Naive thymus-derived CD4-positive, alpha-beta T cell (primary cell): ENCODE measurements at regions of chr7 and their contacts with region 1.

Region 1: DNA sequence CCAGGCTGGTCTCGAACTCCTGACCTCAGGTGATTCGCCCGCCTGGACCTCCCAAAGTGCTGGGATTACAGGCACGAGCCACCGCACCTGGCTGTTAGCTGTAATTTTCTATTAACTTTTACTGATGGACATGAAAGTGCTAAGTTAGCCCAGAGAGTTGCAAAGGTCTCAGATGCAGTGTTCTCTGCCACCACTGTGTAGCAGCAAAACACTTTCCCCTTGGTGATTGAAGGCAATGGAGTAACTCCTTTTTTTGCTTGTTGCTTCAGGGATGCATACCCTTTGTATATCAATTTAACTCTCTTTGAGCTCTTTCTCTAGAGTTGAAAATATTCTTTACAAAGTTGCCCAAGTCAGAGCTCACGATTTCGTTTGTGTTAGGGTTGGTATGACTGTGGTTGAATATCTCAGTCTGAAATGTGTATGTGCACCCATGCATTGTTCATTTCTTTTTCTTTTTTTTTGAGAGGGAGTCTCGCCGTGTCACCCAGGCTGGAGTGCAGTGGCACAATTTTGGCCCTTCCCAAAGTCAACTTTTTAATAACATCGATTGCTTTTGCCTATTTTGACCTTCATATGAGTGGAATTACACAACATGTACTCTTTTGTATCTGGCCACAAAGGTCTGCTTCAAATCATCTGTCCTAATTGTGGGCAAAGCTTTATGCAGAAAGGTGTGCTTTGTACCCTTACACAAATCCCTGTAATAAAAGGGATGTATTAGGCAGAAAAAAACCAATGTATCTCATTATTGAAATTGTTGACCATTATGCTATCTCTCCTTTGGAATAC is 52.6 kb downstream of the GTF2I start:
- DNase-seq: no peak
- ATAC-seq: no peak
- H3K4me3 ChIP-seq: no peak overlapping the region
- H3K4me3 Mint-ChIP-seq: no peak overlapping the region
- H3K27ac ChIP-seq: no peak overlapping the region
- H3K27ac Mint-ChIP-seq: peak overlapping the region in 1 of 9 donors; percentile 66
- H3K4me1 ChIP-seq: no peaks in the 10 kb centered on the region
- H3K4me1 Mint-ChIP-seq: peaks cover 0 to 4% (median 0%) of the 10 kb centered on the region in 7 donors
- H3K27me3 ChIP-seq: no peaks in the 10 kb centered on the region
- H3K27me3 Mint-ChIP-seq: no peaks in the 10 kb centered on the region

Region 2: DNA sequence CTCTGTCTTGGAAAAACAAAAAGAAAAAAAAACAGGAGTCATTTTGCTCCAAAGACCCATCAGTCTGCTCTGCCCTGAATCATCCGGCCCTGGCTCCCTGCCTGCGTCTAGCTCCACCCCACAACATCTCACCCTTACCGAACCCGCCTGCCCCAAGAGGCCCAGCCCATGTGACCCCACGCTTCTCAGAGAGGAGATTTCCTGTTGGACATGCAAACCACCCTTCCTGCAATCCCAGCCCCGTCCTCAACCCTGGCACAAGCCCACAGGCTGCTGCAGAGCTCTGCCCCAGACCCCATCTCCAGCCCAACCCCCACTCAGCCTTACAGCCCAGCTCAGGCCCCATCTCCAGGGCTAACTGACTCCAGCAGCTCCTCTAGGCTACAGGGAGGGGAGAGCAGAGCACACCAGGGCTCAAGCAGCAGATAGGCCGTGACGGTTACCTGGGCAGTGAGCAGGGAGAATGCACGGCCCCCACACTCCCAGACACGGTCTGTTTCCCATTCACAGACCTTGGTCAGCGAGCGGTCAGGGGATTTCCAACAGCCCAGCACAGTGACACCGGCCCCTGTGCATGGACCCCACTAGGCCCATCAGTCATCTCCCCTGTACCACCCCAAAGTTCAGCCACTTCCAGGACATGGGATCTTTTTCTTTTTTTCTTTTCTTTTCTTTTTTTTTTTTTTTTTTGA is 122.5 kb before region 1 on chr7:
- CTCF ChIA-PET with region 1: no interaction called
- POLR2A ChIA-PET with region 1: no interaction called
- intact Hi-C with region 1: no loop called
- DNase-seq: no peak
- ATAC-seq: no peak
- H3K4me3 ChIP-seq: no peak overlapping the region
- H3K4me3 Mint-ChIP-seq: no peak overlapping the region
- H3K27ac ChIP-seq: no peak overlapping the region
- H3K27ac Mint-ChIP-seq: no peak overlapping the region
- H3K4me1 ChIP-seq: no peaks in the 10 kb centered on the region
- H3K4me1 Mint-ChIP-seq: peaks cover 0 to 4% (median 0%) of the 10 kb centered on the region in 7 donors
- H3K27me3 ChIP-seq: no peaks in the 10 kb centered on the region
- H3K27me3 Mint-ChIP-seq: no peaks in the 10 kb centered on the region

Region 3: DNA sequence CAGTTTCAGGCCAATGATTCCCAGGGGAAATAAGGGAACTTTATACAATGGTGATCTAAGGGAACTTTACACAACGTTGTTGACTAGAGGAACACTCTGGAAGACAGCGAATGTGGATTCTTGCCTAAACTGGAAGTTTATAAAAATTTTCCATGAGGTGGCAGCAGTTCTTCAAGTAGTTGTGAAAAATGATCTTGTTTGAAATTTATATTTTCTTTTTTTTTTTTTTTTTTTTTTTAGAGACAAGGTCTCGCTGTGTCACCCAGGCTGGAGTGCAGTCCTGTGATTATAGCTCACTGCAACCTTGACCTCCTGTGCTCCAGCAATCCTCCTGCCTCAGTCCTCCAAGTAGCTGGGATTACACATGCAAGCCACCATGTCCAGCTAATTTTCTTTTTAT is 84.6 kb before region 1 on chr7:
- CTCF ChIA-PET with region 1: no interaction called
- POLR2A ChIA-PET with region 1: no interaction called
- intact Hi-C with region 1: loop called in 1 of 2 experiments (anchors 10 kb)
- DNase-seq: peak in 6 of 9 donors; percentile 18 to 38 (median 28)
- ATAC-seq: no peak
- H3K4me3 ChIP-seq: no peak overlapping the region
- H3K4me3 Mint-ChIP-seq: no peak overlapping the region
- H3K27ac ChIP-seq: no peak overlapping the region
- H3K27ac Mint-ChIP-seq: no peak overlapping the region
- H3K4me1 ChIP-seq: no peaks in the 10 kb centered on the region
- H3K4me1 Mint-ChIP-seq: peaks cover 0 to 10% (median 5%) of the 10 kb centered on the region in 7 donors
- H3K27me3 ChIP-seq: no peaks in the 10 kb centered on the region
- H3K27me3 Mint-ChIP-seq: peaks cover 0 to 4% (median 0%) of the 10 kb centered on the region in 5 donors

Region 4: DNA sequence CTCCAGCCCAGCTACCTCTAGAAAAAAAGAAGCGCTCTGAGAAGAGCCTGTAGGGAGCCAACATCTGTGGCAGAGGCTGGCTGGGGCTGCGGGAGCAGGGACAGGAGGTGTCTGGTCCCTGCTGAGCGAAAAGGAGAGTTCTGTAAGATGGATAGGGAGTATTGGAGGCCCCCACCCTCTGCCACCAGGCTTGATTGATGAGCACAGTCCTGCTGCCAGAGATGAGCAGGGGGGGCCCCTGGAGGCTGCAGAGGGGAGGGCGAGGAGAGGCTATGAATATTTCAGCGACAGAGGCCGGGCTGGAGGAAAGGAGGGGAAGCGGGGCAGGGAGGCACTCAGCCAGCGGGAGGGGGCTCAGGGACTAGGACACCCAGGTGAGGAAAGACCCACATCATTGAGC is 1547.9 kb after region 1 on chr7:
- CTCF ChIA-PET with region 1: no interaction called
- POLR2A ChIA-PET with region 1: no interaction called
- intact Hi-C with region 1: no loop called
- DNase-seq: no peak
- ATAC-seq: no peak
- H3K4me3 ChIP-seq: no peak overlapping the region
- H3K4me3 Mint-ChIP-seq: peak overlapping the region in 2 of 10 donors; percentile 12 to 14
- H3K27ac ChIP-seq: no peak overlapping the region
- H3K27ac Mint-ChIP-seq: no peak overlapping the region
- H3K4me1 ChIP-seq: no peaks in the 10 kb centered on the region
- H3K4me1 Mint-ChIP-seq: peaks cover 0 to 9% (median 0%) of the 10 kb centered on the region in 7 donors
- H3K27me3 ChIP-seq: no peaks in the 10 kb centered on the region
- H3K27me3 Mint-ChIP-seq: peaks cover 14 to 43% (median 34%) of the 10 kb centered on the region in 5 donors